K562 (cell line): ENCODE measurements at regions of chr4 and their contacts with region 1.

Region 1: DNA sequence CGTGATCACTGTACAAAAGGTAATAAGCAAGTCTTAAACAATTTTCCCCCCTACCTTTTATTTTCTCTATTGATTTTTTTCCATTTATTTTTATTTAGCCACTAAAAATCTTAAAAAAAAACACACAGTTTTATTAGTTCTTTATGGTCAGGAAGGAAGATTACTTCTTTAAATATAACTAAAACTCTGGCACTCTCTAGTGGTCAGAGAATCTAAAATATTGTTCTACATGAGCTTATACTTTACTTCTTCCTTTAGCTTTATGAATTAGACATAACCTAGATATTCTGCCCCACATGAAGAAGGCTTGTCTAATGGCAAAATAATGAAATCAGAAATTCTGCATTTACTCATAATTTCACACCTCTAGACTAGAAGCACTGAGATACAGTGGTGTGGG is 135.2 kb downstream of the PDE5A start:
- DNase-seq: no peak
- ATAC-seq: no peak; the same call in 2 of the 3 replicates
- H3K4me3 ChIP-seq: no peak overlapping the region
- H3K27ac ChIP-seq: no peak overlapping the region
- H3K4me1 ChIP-seq: no peaks in the 10 kb centered on the region
- H3K27me3 ChIP-seq: no peaks in the 10 kb centered on the region
- CTCF ChIP-seq: peak in 1 of 3 experiments; percentile 15; a peak in 1 of 6 replicates
- EP300 ChIP-seq: no peak
- POLR2A ChIP-seq: no peak
- RAD21 ChIP-seq: 0 out of 4 replicates have a peak, but pooled peaks of 1 of the 2 experiments have one; percentile 9

Region 2: DNA sequence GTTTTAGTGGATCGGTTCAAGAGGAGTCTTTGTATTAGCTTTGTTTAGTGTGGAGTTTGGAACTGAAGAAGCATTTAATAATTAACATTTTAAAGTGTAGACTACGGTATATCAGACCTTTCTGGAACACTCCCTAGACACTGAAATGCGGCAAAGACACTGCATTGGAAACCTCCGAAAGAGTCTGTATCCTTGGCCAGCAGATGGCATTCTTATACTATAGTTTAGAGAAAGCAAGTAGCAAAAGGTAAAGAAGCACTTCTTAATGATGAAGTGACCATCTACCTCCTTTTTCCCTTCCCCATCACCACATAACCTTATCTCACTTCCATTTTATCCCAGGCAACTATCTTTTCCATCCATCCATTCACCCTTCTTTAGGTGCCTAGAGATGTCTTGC is 179.1 kb before region 1 on chr4:
- CTCF ChIA-PET with region 1: interaction called, 4 read pairs
- POLR2A ChIA-PET with region 1: no interaction called
- in situ Hi-C with region 1: no loop called
- intact Hi-C with region 1: loop called (anchors 2 kb)
- DNase-seq: peak in 1 of 4 experiments; percentile 44
- ATAC-seq: peak; percentile 83
- H3K4me3 ChIP-seq: no peak overlapping the region
- H3K27ac ChIP-seq: no peak overlapping the region
- H3K4me1 ChIP-seq: no peaks in the 10 kb centered on the region
- H3K27me3 ChIP-seq: peaks cover 0 to 5% of the 10 kb centered on the region in 2 experiments; a peak in 1 of 5 replicates
- CTCF ChIP-seq: peak; percentile 27 to 63 (median 44); a peak in 5 of 6 replicates
- EP300 ChIP-seq: no peak
- POLR2A ChIP-seq: no peak
- RAD21 ChIP-seq: peak; percentile 71 to 73

Region 3: GRCh38 chr4:119977076-119977940 is 483.9 kb after region 1 on chr4:
- CTCF ChIA-PET with region 1: no interaction called
- POLR2A ChIA-PET with region 1: no interaction called
- in situ Hi-C with region 1: no loop called
- intact Hi-C with region 1: no loop called
- DNase-seq: no peak
- ATAC-seq: no peak
- H3K4me3 ChIP-seq: no peak overlapping the region
- H3K27ac ChIP-seq: no peak overlapping the region
- H3K4me1 ChIP-seq: no peaks in the 10 kb centered on the region
- H3K27me3 ChIP-seq: no peaks in the 10 kb centered on the region
- CTCF ChIP-seq: no peak
- EP300 ChIP-seq: no peak
- POLR2A ChIP-seq: no peak
- RAD21 ChIP-seq: no peak